IMR-90 (cell line): ENCODE measurements at regions of chr3 and their contacts with region 1.

Region 1: DNA sequence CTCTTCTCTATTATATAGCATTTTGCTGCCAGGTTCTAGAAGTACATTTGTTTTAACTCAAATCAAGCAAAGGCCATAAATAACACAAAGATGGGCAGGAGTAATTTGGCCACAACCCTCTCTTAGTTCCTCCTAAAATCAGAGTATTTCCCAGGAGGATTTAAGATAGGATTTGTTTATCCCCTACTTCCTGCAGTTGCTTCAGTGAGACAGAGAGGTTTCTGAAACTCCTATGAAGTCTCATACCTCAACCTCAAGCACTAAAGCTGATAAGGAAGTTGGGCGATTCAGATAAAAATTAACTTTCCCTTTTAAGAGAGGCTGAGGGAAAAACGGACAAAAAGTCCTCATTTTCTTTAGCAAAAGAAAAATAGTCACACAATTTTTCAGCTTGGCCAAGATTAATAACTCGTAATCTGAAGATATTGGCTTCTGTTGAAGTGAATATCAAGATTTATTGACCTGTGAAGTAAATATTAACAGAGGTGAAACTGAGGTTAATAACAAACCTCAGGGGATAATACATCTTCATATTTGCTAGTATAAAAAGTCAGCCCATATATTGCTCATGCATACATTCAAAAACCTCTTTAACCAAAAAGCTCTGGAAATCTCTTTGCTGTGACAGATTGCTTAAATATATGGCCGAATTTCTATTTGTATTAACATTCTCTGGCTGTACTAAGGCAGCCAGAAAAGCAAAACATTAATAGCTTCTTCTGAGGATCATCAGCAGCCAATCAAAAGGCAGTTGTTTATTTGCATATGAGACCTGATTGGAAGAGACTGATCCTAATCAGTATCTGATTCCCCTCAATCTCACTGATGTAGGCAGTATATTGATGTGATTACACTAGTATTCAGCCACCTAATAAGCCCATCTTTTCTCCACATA is 90.6 kb upstream of the GADL1 start:
- DNase-seq: peak; percentile 13
- ATAC-seq: no peak
- H3K4me3 ChIP-seq: no peak overlapping the region
- H3K27ac ChIP-seq: no peak overlapping the region
- H3K4me1 ChIP-seq: no peaks in the 10 kb centered on the region
- H3K27me3 ChIP-seq: peaks cover 3% of the 10 kb centered on the region; the same call in 1 of the 2 replicates
- CTCF ChIP-seq: no peak
- POLR2A ChIP-seq: no peak
- RAD21 ChIP-seq: no peak

Region 2: DNA sequence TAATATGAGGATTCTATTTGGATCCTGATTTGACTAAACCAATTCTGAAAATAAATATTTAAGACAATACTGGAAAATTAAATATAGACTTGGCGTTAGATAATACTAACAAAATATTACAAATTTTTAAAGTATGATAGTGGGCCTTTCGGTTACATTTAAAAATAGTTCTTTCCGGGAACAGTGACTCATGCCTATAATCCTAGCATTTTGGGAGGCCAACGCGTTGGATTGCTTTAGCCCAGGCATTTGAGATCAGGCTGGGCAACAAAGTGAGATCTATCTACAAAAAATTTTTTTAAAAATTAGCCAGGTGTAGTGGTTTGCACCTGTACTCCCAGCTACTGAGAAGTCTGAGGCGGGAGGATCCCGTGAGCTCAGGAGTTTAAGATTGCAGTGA is 60.3 kb before region 1 on chr3:
- CTCF ChIA-PET with region 1: no interaction called
- POLR2A ChIA-PET with region 1: no interaction called
- dilution Hi-C with region 1: no loop called
- in situ Hi-C with region 1: no loop called
- intact Hi-C with region 1: loop called (anchors 10 kb)
- DNase-seq: peak; percentile 31
- ATAC-seq: peak; percentile 46
- H3K4me3 ChIP-seq: no peak overlapping the region
- H3K27ac ChIP-seq: peak overlapping the region; percentile 43; the same call in 1 of the 2 replicates
- H3K4me1 ChIP-seq: peaks cover 2% of the 10 kb centered on the region; the same call in 1 of the 2 replicates
- H3K27me3 ChIP-seq: no peaks in the 10 kb centered on the region
- CTCF ChIP-seq: no peak
- POLR2A ChIP-seq: no peak
- RAD21 ChIP-seq: no peak

Region 3: DNA sequence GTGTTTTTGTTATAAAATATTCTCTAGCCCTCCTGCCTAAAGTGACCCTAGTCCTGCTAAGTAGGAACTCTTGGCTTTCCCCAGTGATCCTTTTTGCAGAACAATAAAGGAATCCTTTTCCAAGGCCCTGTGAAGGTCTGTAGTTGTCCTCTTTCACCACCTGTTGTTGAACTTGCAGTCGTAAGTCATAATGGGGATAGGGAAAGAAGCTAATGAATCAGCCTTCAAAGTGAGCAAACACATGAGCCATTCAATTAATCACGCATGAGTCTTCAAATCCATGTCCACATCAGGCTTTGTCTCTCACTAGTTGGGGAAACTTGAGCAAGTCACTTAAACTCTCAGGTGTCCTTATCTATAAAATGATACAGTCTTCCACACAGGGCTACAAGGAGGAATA is 1024.0 kb after region 1 on chr3:
- CTCF ChIA-PET with region 1: no interaction called
- POLR2A ChIA-PET with region 1: no interaction called
- dilution Hi-C with region 1: no loop called
- in situ Hi-C with region 1: no loop called
- intact Hi-C with region 1: no loop called
- DNase-seq: no peak
- ATAC-seq: no peak
- H3K4me3 ChIP-seq: no peak overlapping the region
- H3K27ac ChIP-seq: no peak overlapping the region
- H3K4me1 ChIP-seq: no peaks in the 10 kb centered on the region
- H3K27me3 ChIP-seq: no peaks in the 10 kb centered on the region; the same call in 1 of the 2 replicates
- CTCF ChIP-seq: no peak
- POLR2A ChIP-seq: no peak
- RAD21 ChIP-seq: no peak